ENCODE measurements at regions of chr11 and their contacts with region 1.

Region 1: DNA sequence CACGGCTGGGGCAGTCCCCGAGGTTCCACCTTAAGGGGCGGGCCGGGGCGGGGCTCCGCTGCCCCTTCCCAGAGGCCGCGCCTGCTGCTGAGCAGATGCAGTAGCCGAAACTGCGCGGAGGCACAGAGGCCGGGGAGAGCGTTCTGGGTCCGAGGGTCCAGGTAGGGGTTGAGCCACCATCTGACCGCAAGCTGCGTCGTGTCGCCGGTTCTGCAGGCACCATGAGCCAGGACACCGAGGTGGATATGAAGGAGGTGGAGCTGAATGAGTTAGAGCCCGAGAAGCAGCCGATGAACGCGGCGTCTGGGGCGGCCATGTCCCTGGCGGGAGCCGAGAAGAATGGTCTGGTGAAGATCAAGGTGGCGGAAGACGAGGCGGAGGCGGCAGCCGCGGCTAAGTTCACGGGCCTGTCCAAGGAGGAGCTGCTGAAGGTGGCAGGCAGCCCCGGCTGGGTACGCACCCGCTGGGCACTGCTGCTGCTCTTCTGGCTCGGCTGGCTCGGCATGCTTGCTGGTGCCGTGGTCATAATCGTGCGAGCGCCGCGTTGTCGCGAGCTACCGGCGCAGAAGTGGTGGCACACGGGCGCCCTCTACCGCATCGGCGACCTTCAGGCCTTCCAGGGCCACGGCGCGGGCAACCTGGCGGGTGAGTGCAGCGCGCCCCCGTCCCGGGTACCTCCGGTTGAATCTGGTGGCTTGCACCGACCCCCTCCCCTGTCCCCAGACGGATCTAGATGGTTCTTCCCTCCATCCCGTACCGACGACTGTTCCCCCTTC is at the start of gene SLC3A2:
- DNase-seq: peak; percentile 61 to 94 (median 82)
- ATAC-seq: peak; percentile 74
- H3K4me3 ChIP-seq: peak within 1 kb of the TSS; percentile 99
- H3K4me3 Mint-ChIP-seq: peak within 1 kb of the TSS; percentile 93
- H3K27ac ChIP-seq: peak within 1 kb of the TSS; percentile 95 to 98
- H3K27ac Mint-ChIP-seq: peak within 1 kb of the TSS; percentile 100
- H3K4me1 ChIP-seq: peaks cover 47% of the 10 kb centered on the region
- H3K4me1 Mint-ChIP-seq: peaks cover 52% of the 10 kb centered on the region
- H3K27me3 ChIP-seq: no peaks in the 10 kb centered on the region
- H3K27me3 Mint-ChIP-seq: no peaks in the 10 kb centered on the region
- CTCF ChIP-seq: peak; percentile 86
- total RNA-seq, gene SLC3A2: 231 to 234 TPM

Region 2: DNA sequence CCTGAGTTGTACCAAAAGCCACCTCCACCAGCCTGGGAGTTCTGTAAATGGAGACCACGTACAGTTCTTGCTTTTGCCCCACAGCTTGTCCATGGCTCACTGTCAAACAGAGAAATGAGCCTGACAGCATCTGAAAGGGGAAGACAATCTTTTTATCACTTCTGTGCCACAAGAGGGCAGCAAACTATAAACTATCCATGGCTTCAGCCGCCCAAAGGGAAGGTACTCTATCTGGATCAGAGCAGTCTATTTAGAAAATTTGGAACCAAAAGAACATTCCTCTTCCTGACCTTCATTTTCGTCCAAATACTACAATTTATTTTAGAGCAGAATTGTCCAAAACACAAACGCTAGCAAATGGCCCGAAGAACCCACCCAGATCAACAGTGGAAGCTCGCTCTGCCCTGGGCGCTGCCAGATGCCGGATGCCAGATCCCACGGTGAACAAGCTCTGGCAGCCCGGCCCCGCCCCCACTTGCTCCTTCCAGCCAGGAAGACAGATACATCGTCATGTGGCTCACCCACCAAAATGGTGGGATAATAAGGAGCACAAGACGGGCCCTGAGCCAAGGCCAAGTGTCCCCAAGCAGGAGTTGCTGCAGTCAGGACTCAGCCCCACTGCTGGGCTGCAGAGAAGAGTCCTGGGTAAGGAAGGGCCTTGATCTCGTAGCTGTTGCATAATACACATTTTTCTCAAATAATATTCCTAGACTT is 486.0 kb before region 1 on chr11:
- CTCF ChIA-PET with region 1: no interaction called
- POLR2A ChIA-PET with region 1: no interaction called
- intact Hi-C with region 1: loop called in 1 of 2 experiments (anchors 10 kb)
- DNase-seq: peak in 8 of 14 experiments; percentile 13 to 84 (median 53)
- ATAC-seq: peak; percentile 78
- H3K4me3 ChIP-seq: no peak overlapping the region
- H3K4me3 Mint-ChIP-seq: no peak overlapping the region
- H3K27ac ChIP-seq: no peak overlapping the region
- H3K27ac Mint-ChIP-seq: no peak overlapping the region
- H3K4me1 ChIP-seq: peaks cover 10% of the 10 kb centered on the region
- H3K4me1 Mint-ChIP-seq: peaks cover 18% of the 10 kb centered on the region
- H3K27me3 ChIP-seq: no peaks in the 10 kb centered on the region
- H3K27me3 Mint-ChIP-seq: no peaks in the 10 kb centered on the region
- CTCF ChIP-seq: peak; percentile 81

Region 3: DNA sequence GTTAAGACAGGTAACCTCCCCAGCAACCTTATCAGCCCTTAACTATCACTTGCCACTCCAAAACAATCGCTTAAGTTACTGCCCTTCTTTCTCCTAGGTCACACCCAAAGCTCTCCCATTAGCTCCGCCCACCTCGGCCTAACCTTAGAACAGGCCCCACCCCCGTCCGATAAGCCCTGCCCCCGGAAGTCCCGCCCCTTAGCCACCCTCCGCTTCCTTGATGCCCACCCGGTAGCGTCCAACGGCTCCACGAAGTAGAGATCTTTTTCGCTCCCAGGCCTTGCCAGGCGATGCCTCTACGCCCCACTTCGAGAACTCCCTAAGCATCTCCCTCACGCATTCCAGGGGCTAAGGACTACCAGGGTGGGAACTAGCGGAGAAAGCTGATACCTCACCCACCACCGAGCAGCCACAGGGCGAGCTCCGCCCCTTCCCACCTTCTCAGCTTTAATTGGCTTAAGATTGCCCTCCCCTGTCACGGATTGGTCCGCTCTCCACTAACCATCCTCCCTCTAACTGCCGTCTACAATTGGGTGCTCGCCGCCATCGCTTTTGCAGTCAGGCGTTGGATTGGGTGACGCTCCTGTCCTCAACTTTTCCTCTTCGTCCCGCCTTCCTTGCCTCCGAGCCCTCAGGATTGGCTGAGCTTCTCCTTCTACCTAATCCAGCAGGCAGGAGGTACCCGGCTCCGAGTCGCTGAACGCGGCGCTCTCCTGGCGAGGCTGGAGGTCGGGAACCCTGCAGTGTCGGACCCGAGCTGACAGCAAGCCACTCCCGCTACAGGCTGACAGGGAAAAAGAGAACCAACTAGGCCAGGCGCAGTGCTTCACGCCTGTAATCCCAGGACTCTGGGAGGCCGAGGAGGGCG is 127.0 kb before region 1 on chr11 and contains the start of gene ZBTB3:
- CTCF ChIA-PET with region 1: interaction called, 8 read pairs
- POLR2A ChIA-PET with region 1: interaction called, 37 read pairs
- intact Hi-C with region 1: no loop called
- DNase-seq: peak; percentile 92 to 100 (median 97)
- ATAC-seq: peak; percentile 93
- H3K4me3 ChIP-seq: peak within 1 kb of the TSS; percentile 80
- H3K4me3 Mint-ChIP-seq: peak within 1 kb of the TSS; percentile 93
- H3K27ac ChIP-seq: peak within 1 kb of the TSS; percentile 84 to 88
- H3K27ac Mint-ChIP-seq: peak within 1 kb of the TSS; percentile 89
- H3K4me1 ChIP-seq: peaks cover 41% of the 10 kb centered on the region
- H3K4me1 Mint-ChIP-seq: peaks cover 35% of the 10 kb centered on the region
- H3K27me3 ChIP-seq: no peaks in the 10 kb centered on the region
- H3K27me3 Mint-ChIP-seq: no peaks in the 10 kb centered on the region
- CTCF ChIP-seq: no peak
- total RNA-seq, gene ZBTB3: 2.3 to 3.5 TPM

Region 4: GRCh38 chr11:62787005-62787759 is 93.8 kb before region 1 on chr11 and contains the start of gene TMEM179B:
- CTCF ChIA-PET with region 1: interaction called, 35 read pairs
- POLR2A ChIA-PET with region 1: interaction called, 44 read pairs
- intact Hi-C with region 1: loop called (anchors 1 kb)
- DNase-seq: peak; percentile 90 to 99 (median 97)
- ATAC-seq: peak; percentile 61
- H3K4me3 ChIP-seq: peak within 1 kb of the TSS; percentile 77
- H3K4me3 Mint-ChIP-seq: peak within 1 kb of the TSS; percentile 98
- H3K27ac ChIP-seq: peak within 1 kb of the TSS; percentile 80 to 92
- H3K27ac Mint-ChIP-seq: peak within 1 kb of the TSS; percentile 98
- H3K4me1 ChIP-seq: peaks cover 53% of the 10 kb centered on the region
- H3K4me1 Mint-ChIP-seq: peaks cover 55% of the 10 kb centered on the region
- H3K27me3 ChIP-seq: no peaks in the 10 kb centered on the region
- H3K27me3 Mint-ChIP-seq: no peaks in the 10 kb centered on the region
- CTCF ChIP-seq: no peak
- total RNA-seq, gene TMEM179B: 34.7 to 37.4 TPM

Region 5: DNA sequence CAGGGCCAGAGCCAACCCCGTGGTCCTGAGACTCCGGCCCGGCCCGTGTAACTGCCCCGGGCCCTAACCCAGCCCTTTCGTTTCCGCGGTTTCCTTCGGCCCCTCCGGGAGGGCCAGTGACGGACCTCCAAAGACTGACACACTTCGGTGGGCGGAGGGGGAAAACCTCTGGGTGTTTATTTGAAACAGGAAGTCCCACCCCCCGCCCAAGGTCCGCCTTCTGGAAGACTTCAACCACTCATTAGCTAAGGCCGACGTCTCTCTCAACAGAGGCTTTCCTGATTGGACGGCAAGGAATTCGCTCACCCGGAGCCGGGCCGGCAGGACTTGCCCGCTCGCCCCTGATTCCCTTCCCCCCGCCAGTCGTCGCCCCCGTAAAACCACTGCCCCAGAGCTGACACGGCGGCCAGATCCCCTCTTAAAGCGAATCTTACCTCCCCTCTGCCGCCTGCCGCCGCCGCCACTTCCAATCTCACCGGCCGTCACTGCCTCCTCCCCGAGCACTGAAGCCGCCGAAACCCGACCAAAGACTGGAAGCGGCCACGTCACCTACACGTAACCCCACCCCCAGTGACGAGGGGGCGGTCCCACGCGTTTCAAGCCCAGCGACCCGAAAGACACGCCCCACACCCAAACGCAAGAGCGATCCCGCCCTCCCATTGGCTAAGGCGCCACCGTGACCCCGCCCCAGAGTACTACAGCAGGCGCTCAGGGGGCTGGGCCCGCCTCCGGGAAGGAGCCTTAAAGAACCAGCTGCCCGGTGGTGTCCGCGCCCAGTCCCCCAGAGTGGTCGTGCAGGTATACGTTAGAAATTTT is 49.3 kb before region 1 on chr11 and contains the start of gene STX5:
- CTCF ChIA-PET with region 1: interaction called, 14 read pairs
- POLR2A ChIA-PET with region 1: interaction called, 13 read pairs
- intact Hi-C with region 1: loop called in 1 of 2 experiments (anchors 2 kb)
- DNase-seq: peak; percentile 99 to 100 (median 99)
- ATAC-seq: peak; percentile 95
- H3K4me3 ChIP-seq: peak within 1 kb of the TSS; percentile 86
- H3K4me3 Mint-ChIP-seq: peak within 1 kb of the TSS; percentile 92
- H3K27ac ChIP-seq: peak within 1 kb of the TSS; percentile 95 to 97
- H3K27ac Mint-ChIP-seq: peak within 1 kb of the TSS; percentile 95
- H3K4me1 ChIP-seq: peaks cover 44% of the 10 kb centered on the region
- H3K4me1 Mint-ChIP-seq: peaks cover 40% of the 10 kb centered on the region
- H3K27me3 ChIP-seq: no peaks in the 10 kb centered on the region
- H3K27me3 Mint-ChIP-seq: no peaks in the 10 kb centered on the region
- CTCF ChIP-seq: no peak
- total RNA-seq, gene STX5: 93.1 to 104 TPM

Region 6: DNA sequence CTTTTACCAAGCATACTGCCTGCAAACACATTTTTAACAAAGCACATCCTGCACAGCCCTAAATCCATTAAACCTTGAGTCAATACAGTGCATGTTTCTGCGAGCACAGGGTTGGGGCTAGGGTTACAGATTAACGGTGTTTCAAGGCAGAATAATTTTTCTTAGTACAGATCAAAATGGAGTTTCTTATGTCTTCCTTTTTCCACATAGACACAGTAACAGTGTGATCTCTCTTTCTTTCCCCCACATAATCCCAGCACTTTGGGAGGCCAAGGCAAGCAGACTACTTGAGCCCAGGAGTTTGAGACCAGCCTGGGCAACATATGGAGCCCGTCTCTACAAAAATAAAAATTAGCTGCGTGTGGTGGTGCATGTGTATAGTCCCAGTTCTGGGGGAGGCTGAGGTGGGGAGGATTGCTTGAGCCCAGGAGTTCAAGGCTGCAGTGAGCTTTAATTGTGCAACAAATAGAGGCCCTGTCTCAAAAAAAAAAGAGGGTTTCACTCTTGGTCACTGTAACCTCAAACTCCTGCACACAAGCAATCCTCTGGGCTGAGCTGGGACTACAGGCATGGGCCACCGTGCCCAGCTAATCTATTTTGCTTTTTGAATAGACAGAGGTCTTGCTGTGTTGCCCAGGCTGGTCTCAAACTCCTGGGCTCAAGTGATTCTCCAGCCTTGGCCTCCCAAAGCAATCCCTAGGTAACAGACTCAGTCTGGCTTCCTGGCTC is 20.0 kb before region 1 on chr11:
- CTCF ChIA-PET with region 1: interaction called, 29 read pairs
- POLR2A ChIA-PET with region 1: interaction called, 78 read pairs
- intact Hi-C with region 1: loop called (anchors 1 to 2 kb)
- DNase-seq: no peak
- ATAC-seq: no peak
- H3K4me3 ChIP-seq: no peak overlapping the region
- H3K4me3 Mint-ChIP-seq: no peak overlapping the region
- H3K27ac ChIP-seq: no peak overlapping the region
- H3K27ac Mint-ChIP-seq: no peak overlapping the region
- H3K4me1 ChIP-seq: peaks cover 18% of the 10 kb centered on the region
- H3K4me1 Mint-ChIP-seq: peaks cover 18% of the 10 kb centered on the region
- H3K27me3 ChIP-seq: no peaks in the 10 kb centered on the region
- H3K27me3 Mint-ChIP-seq: no peaks in the 10 kb centered on the region
- CTCF ChIP-seq: no peak

Region 7: DNA sequence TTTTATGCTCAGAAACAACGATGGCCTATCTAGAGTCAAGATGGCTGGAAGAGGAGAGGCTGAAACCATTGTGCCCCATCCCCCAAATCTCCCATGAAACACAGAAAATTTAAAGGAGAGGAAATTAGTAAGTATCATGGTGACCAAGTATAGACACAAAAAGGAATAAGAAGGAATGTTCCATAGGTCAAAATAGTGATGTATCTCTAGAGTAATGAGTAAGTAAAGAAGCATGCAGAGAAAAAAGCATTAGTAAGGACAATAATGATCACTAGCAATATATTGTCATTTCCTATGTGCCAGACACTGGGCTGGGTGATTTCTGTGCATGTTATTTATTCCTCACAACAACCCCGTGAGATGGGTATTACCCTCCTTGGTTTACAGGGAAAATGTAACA is 265.6 kb after region 1 on chr11:
- CTCF ChIA-PET with region 1: no interaction called
- POLR2A ChIA-PET with region 1: no interaction called
- intact Hi-C with region 1: no loop called
- DNase-seq: no peak
- ATAC-seq: no peak
- H3K4me3 ChIP-seq: no peak overlapping the region
- H3K4me3 Mint-ChIP-seq: no peak overlapping the region
- H3K27ac ChIP-seq: no peak overlapping the region
- H3K27ac Mint-ChIP-seq: no peak overlapping the region
- H3K4me1 ChIP-seq: no peaks in the 10 kb centered on the region
- H3K4me1 Mint-ChIP-seq: no peaks in the 10 kb centered on the region
- H3K27me3 ChIP-seq: no peaks in the 10 kb centered on the region
- H3K27me3 Mint-ChIP-seq: peaks cover 22% of the 10 kb centered on the region
- CTCF ChIP-seq: no peak

Measured in CD4-positive, alpha-beta T cell (primary cell).